ENCODE measurements at regions of chr1 and their contacts with region 1.

Region 1: DNA sequence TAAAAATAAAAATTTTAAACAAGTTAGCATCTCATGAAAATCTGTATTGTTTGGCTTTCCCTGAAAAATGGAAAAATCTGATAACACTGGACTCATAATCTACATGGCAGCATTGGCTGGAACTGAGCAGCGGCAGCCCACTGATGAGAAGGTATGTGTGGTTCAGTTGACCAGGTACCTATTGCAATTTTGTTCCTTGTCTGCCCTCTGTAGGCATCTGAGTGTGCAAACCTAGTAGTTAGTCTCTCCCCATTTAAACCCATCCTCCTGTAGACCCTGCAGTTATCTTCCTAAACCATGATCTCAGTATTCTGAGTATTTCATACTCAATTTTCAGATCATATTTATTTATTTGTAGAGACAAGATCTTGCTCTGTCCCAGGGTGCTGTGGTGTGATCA is 59.4 kb upstream of the SERBP1 start:
- DNase-seq: no peak
- H3K4me3 ChIP-seq: no peak overlapping the region
- H3K27ac ChIP-seq: no peak overlapping the region
- H3K4me1 ChIP-seq: no peaks in the 10 kb centered on the region
- H3K27me3 ChIP-seq: no peaks in the 10 kb centered on the region
- CTCF ChIP-seq: peak; percentile 34 to 81 (median 57)

Region 2: GRCh38 chr1:67407498-67407897 is 82.1 kb before region 1 on chr1:
- dilution Hi-C with region 1: no loop called
- DNase-seq: no peak
- H3K4me3 ChIP-seq: no peak overlapping the region
- H3K27ac ChIP-seq: no peak overlapping the region
- H3K4me1 ChIP-seq: peaks cover 6% of the 10 kb centered on the region
- H3K27me3 ChIP-seq: no peaks in the 10 kb centered on the region
- CTCF ChIP-seq: no peak

Region 3: GRCh38 chr1:67429528-67430351 is 59.9 kb before region 1 on chr1:
- dilution Hi-C with region 1: loop called (anchors 5 kb)
- DNase-seq: no peak
- H3K4me3 ChIP-seq: peak overlapping the region; percentile 94 to 99 (median 98)
- H3K27ac ChIP-seq: peak overlapping the region; percentile 97
- H3K4me1 ChIP-seq: peaks cover 32% of the 10 kb centered on the region
- H3K27me3 ChIP-seq: no peaks in the 10 kb centered on the region
- CTCF ChIP-seq: no peak

Region 4: GRCh38 chr1:67446893-67447292 is 42.8 kb before region 1 on chr1:
- dilution Hi-C with region 1: no loop called
- DNase-seq: no peak
- H3K4me3 ChIP-seq: no peak overlapping the region
- H3K27ac ChIP-seq: no peak overlapping the region
- H3K4me1 ChIP-seq: no peaks in the 10 kb centered on the region
- H3K27me3 ChIP-seq: no peaks in the 10 kb centered on the region
- CTCF ChIP-seq: no peak

Region 5: GRCh38 chr1:67561704-67562113 is 72.1 kb after region 1 on chr1:
- dilution Hi-C with region 1: no loop called
- DNase-seq: peak; percentile 74
- H3K4me3 ChIP-seq: no peak overlapping the region
- H3K27ac ChIP-seq: peak overlapping the region; percentile 39
- H3K4me1 ChIP-seq: peaks cover 28% of the 10 kb centered on the region
- H3K27me3 ChIP-seq: no peaks in the 10 kb centered on the region
- CTCF ChIP-seq: peak; percentile 89 to 92 (median 91)

Measured in keratinocyte (primary cell).